Activated CD4-positive, alpha-beta T cell treated with anti-CD3 and anti-CD28 coated beads, Interleukin-2, amount 10 ng/mL, durations not matched to agents 24 days and 14 days (primary cell): ENCODE measurements at regions of chr2 and their contacts with region 1.

Region 1: GRCh38 chr2:73233154-73233931 is at the start of gene PRADC1:
- DNase-seq: peak; percentile 99
- H3K4me3 Mint-ChIP-seq: peak within 1 kb of the TSS; percentile 94
- H3K27ac Mint-ChIP-seq: peak within 1 kb of the TSS; percentile 95
- H3K4me1 Mint-ChIP-seq: peaks cover 36% of the 10 kb centered on the region
- H3K27me3 Mint-ChIP-seq: no peaks in the 10 kb centered on the region
- total RNA-seq, gene PRADC1: 14.8 and 15.9 TPM in 2 replicates

Region 2: DNA sequence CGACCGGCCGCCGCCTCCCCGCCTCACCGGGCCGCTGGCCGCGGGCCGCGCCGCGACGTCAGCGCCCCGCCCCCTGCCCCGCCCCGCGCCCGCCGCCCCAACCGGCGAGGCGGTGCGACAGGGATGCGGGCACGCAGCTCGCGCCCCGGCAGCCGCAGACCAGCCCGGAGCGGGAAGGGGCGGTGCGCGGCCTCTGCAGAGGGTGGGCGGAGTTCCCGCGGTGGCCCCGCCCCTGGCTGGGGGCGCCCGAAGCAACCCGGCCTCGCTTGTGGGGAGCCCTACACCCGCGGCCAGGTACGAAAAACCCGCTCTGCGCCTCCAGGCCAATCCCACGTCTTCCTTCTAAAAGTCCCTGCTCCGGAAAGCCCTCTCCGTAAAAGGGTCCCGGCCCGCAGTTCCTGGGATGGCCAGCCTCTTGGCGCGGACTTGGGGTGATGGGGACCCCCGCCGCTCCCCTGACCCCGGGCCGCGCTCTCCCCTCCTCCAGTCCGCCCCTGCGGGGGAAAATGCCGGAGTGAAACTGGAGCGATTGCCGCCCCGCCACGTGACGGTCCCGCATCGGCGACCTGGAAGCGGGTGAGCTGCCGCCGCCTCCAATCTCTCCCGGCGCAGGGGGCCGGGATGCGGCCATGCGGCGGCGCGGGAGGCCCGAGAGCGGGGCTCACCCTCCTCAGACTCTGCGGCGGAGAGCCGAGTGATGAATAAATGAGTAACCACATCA is 120.3 kb before region 1 on chr2 and contains the start of gene RAB11FIP5:
- intact Hi-C with region 1: loop called (anchors 5 kb)
- DNase-seq: peak; percentile 95
- H3K4me3 Mint-ChIP-seq: peak within 1 kb of the TSS; percentile 88
- H3K27ac Mint-ChIP-seq: peak within 1 kb of the TSS; percentile 59
- H3K4me1 Mint-ChIP-seq: peaks cover 25% of the 10 kb centered on the region
- H3K27me3 Mint-ChIP-seq: peaks cover 11% of the 10 kb centered on the region
- total RNA-seq, gene RAB11FIP5: 13.4 and 13.8 TPM in 2 replicates

Region 3: DNA sequence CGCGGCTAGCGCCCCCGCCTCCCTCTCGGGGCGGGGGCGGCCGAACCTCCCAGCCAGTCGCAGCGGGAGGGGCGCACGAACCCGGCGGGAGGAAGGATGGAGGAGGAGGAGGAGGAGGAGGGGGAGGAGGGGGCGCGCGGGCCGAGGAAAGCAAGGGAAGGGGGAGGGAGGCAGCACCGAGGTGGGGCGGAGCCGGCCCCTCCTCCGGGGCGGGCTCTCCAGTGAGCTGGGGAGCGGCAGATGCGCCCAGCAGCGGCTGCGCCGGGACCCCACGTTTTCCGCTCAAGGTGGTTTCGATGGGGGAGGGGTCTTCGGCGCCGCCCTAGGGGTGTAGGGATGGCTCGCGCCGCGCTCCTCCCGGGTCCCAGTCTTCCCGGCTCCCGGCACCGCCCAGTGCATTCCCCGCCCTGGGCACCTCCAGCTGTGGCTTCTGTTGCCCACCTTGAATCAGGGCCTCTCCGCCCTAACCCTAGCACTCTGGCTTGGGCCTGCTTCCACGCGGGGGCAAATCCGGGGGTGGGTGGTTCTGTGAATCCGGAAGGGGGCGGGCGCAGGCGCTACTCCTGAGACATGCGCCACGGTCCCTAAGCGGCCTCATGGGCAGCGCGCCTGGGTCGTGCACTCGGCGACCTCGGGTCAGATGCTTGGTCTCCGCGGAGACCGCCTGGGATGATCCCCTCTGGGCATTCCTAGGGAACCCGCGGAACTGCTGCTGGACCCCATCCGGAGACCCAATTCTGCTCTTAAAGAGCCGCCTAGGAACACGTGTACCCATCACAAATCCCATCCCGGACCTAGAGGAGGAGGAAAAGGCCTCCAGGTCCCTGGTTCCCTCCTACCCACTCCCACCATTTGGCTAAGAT is 51.2 kb after region 1 on chr2 and contains the start of gene FBXO41:
- intact Hi-C with region 1: loop called (anchors 1 kb)
- DNase-seq: peak; percentile 93
- H3K4me3 Mint-ChIP-seq: peak within 1 kb of the TSS; percentile 85
- H3K27ac Mint-ChIP-seq: peak within 1 kb of the TSS; percentile 78
- H3K4me1 Mint-ChIP-seq: peaks cover 22% of the 10 kb centered on the region
- H3K27me3 Mint-ChIP-seq: peaks cover 20% of the 10 kb centered on the region
- total RNA-seq, gene FBXO41: 32.2 and 33.8 TPM in 2 replicates

Region 4: DNA sequence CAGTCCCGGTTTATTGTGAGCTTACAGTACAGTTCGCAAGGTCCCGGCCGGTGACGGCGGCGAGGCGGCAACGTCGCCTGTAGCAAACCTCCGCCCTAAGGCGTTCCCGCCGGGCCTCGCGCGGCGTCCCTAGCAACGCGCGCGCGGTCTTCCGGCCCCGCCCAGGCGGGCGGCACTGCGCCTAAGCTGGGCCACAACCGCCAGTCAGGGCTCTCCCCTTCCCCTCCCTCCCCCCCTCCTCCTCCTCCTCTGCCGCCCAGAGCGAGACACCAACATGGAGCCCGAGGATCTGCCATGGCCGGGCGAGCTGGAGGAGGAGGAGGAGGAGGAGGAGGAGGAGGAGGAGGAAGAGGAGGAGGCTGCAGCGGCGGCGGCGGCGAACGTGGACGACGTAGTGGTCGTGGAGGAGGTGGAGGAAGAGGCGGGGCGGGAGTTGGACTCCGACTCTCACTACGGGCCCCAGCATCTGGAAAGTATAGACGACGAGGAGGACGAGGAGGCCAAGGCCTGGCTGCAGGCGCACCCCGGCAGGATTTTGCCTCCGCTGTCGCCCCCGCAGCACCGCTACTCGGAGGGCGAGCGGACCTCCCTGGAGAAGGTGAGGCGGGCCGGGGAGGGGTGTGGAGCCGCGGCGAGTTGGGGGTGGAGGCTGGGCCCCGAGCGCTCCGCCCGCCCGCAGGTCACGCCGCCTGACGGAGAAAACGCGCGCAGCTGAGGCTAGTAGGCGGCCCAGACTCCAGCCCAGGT is 152.4 kb after region 1 on chr2 and contains the start of gene ALMS1:
- intact Hi-C with region 1: loop called (anchors 1 kb)
- DNase-seq: peak; percentile 97
- H3K4me3 Mint-ChIP-seq: peak within 1 kb of the TSS; percentile 92
- H3K27ac Mint-ChIP-seq: peak within 1 kb of the TSS; percentile 93
- H3K4me1 Mint-ChIP-seq: peaks cover 23% of the 10 kb centered on the region
- H3K27me3 Mint-ChIP-seq: peaks cover 8% of the 10 kb centered on the region
- total RNA-seq, gene ALMS1: 19.6 and 21.9 TPM in 2 replicates

Region 5: GRCh38 chr2:74119912-74120825 is 886.8 kb after region 1 on chr2:
- intact Hi-C with region 1: loop called (anchors 5 kb)
- DNase-seq: peak; percentile 96
- H3K4me3 Mint-ChIP-seq: peak overlapping the region; percentile 88
- H3K27ac Mint-ChIP-seq: peak overlapping the region; percentile 92
- H3K4me1 Mint-ChIP-seq: peaks cover 9% of the 10 kb centered on the region
- H3K27me3 Mint-ChIP-seq: peaks cover 7% of the 10 kb centered on the region

Region 6: GRCh38 chr2:74458132-74458925 is 1225.0 kb after region 1 on chr2 and contains the start of gene WBP1:
- intact Hi-C with region 1: loop called (anchors 5 kb)
- DNase-seq: peak; percentile 99
- H3K4me3 Mint-ChIP-seq: peak within 1 kb of the TSS; percentile 100
- H3K27ac Mint-ChIP-seq: peak within 1 kb of the TSS; percentile 100
- H3K4me1 Mint-ChIP-seq: peaks cover 54% of the 10 kb centered on the region
- H3K27me3 Mint-ChIP-seq: no peaks in the 10 kb centered on the region
- total RNA-seq, gene WBP1: 28.8 and 29.0 TPM in 2 replicates

Region 7: GRCh38 chr2:74488644-74489481 is 1255.5 kb after region 1 on chr2:
- intact Hi-C with region 1: no loop called
- DNase-seq: no peak
- H3K4me3 Mint-ChIP-seq: no peak overlapping the region
- H3K27ac Mint-ChIP-seq: no peak overlapping the region
- H3K4me1 Mint-ChIP-seq: peaks cover 10% of the 10 kb centered on the region
- H3K27me3 Mint-ChIP-seq: no peaks in the 10 kb centered on the region